ENCODE measurements at regions of chr14 and their contacts with region 1.

Region 1: GRCh38 chr14:75126679-75127473 is at the start of gene NEK9:
- DNase-seq: peak; percentile 94
- CTCF ChIP-seq: no peak

Region 2: DNA sequence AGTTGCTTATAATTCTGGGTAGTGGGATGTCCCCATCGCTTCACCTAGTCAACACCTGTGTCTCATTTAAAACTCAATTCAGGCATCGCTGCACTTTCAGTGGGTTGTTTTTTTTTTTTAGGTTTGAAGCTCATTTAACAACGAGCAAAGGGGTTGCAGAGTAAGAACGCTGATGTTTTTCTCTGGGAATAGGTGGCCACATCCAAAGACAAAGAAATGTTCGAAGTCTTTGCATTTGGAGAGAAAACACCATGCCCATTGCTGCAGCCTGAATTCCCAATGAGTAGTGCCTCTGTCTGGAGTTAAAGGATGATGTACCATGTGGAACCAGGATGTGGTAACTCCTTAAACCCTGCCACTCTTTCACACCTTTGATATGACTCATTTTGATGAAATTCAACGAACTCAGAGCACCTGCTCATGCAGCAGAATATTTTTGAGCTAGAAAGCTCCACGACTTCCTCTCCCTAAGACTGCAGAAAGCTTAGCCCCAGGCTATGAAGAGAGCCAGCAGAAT is 360.3 kb after region 1 on chr14:
- in situ Hi-C with region 1: loop called (anchors 25 kb)
- DNase-seq: peak; percentile 57
- CTCF ChIP-seq: no peak

Region 3: DNA sequence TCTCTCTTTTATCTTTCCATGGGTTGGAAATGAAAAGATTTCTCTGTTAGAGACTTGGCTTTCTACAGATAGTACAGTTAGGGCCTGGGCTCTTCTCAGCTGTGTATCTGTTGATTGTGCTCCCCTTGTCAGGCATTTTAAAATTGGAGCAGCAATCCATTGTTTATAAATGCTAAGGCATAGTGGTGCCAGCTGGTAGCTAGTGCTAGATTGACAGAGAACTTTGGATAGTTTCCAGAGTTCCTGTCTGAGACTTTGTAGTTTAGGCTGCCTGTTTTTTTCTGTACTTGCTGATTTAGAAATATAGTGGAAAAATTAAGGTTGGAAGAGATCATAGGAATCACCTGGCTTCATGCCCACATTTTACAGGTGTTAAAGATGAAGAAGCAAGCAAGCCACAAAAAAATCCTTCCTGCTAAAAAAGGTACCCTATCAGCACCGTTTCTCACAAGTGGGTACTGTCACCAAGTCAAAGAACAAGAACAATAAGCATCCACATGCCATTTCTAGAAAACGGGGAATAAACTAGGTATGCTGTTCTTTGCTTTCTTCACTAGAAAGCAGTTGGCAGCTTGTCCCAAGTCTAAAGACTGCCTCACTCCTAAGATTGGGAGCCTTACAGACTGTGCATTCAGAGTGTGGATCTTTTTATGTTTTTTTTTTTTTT is 540.4 kb after region 1 on chr14:
- in situ Hi-C with region 1: no loop called
- DNase-seq: no peak
- CTCF ChIP-seq: no peak

Measured in GM13976 (cell line).